PC-9 (cell line): ENCODE measurements at regions of chr13 and their contacts with region 1.

Region 1: DNA sequence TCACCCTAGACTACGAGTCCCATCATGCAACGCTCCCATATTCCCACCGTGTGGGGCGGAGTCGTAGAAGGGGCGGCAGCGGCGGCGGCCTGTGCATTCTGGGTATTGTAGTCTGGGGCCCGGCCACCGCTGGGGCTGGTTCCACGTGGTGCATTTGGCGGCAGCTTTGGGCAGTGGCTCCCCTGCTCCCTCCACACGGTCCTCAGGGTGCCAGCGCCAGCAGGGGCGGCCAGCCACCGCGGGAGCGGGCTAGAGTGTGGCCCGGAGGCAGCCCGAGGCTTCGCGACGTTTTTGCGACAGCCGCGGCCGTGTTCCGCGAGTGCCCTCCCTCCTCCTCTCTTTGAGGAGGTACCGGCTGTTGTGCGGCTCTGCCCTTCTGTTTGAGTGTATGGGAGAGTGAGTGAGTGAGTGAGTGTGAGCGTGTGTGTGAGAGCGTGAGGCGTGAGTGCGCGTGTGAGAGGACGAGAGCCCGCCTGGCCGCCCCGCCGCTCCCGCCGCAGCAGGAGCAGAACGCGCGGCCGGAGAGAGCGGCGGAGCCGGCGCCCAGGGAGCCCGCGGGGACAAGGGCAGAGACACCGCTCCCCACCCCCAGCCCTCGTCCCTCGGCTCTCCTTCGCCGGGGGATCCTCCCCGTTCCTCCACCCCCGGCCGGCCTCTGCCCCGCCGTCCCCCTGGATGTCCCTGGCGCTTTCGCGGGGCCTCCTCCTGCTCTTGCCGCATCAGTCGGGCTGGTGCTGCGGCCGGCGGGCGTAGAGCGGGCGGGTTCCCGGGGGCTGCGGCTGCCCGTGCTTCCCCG is at the start of gene CDK8:
- DNase-seq: peak; percentile 77 to 79
- H3K4me3 ChIP-seq: peak within 1 kb of the TSS; percentile 67
- H3K27ac ChIP-seq: peak within 1 kb of the TSS; percentile 59
- H3K4me1 ChIP-seq: peaks cover 28% of the 10 kb centered on the region
- H3K27me3 ChIP-seq: peaks cover 3% of the 10 kb centered on the region
- CTCF ChIP-seq: no peak
- total RNA-seq, gene CDK8: 14.8 and 16.8 TPM in 2 replicates

Region 2: GRCh38 chr13:26132756-26133155 is 121.2 kb before region 1 on chr13:
- CTCF ChIA-PET with region 1: no interaction called
- POLR2A ChIA-PET with region 1: no interaction called
- intact Hi-C with region 1: no loop called
- DNase-seq: no peak
- H3K4me3 ChIP-seq: no peak overlapping the region
- H3K27ac ChIP-seq: no peak overlapping the region
- H3K4me1 ChIP-seq: no peaks in the 10 kb centered on the region
- H3K27me3 ChIP-seq: peaks cover 38% of the 10 kb centered on the region
- CTCF ChIP-seq: no peak

Region 3: DNA sequence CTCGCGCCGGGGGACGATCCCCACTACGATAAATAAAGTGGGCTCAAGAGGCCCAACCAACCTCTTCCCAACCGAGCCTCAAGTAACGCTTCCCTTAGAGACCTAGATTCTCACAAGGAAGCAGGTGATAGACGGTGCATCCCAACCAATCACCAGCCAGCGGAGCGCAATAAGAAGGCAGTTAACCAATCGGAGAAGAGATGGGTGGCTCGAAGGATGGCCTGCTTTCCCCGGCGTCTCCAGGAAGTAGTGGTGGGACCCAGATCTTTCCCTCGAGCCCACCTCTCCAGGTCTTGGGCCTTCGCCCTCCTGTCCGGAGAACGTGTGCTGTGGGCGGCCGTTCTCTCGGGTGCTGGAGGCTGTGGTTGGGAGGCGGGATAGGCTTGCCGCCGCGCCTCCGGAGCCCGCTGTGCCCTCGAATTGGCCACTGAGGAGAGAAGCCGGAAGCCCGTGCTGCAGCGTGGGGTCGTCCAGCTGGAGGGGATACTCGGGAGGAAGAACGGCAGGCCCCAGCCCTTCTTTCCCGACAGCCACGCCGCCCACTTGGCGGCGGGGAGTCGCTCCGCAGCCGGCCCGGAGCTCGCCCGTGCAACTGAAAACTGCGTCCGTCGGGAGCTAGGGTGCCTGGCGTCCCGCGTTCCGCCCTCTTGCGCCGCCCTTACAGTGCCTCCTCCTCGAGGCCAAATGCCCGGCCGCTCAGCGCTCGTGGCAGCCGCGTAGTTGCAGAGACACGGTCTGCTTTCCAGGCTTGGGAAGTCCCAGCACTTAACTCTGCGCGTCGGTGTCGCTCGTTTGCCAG is 32.1 kb before region 1 on chr13 and contains the start of gene RNF6:
- CTCF ChIA-PET with region 1: no interaction called
- POLR2A ChIA-PET with region 1: no interaction called
- intact Hi-C with region 1: loop called (anchors 2 kb)
- DNase-seq: peak; percentile 85 to 96
- H3K4me3 ChIP-seq: peak within 1 kb of the TSS; percentile 83
- H3K27ac ChIP-seq: peak within 1 kb of the TSS; percentile 87
- H3K4me1 ChIP-seq: peaks cover 10% of the 10 kb centered on the region
- H3K27me3 ChIP-seq: no peaks in the 10 kb centered on the region
- CTCF ChIP-seq: no peak
- total RNA-seq, gene RNF6: 19.2 and 30.3 TPM in 2 replicates

Region 4: DNA sequence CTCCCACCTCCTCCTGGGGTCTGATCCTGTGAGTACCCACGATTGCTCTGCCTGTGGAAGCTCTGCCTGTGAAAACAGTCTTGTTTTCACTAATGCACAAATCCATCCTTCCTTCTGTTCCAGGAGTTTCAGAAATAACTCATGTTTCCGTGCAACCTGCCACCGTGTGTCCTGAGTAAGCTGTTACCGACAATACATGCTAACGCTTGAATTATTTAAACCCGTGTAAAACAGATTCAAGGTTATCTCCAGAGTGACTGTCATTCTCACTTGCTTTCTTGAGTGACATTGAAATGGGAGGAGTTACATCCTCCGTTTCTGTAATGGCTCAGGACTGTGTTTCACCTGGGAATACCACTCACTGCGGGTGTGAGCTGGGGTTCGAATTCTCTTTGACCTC is 481.7 kb after region 1 on chr13:
- CTCF ChIA-PET with region 1: no interaction called
- POLR2A ChIA-PET with region 1: no interaction called
- intact Hi-C with region 1: no loop called
- DNase-seq: no peak
- H3K4me3 ChIP-seq: no peak overlapping the region
- H3K27ac ChIP-seq: no peak overlapping the region
- H3K4me1 ChIP-seq: no peaks in the 10 kb centered on the region
- H3K27me3 ChIP-seq: peaks cover 34% of the 10 kb centered on the region
- CTCF ChIP-seq: no peak